Sciatic nerve (tissue), 2 donors: ENCODE measurements at regions of chr16 and their contacts with region 1.

Region 1: DNA sequence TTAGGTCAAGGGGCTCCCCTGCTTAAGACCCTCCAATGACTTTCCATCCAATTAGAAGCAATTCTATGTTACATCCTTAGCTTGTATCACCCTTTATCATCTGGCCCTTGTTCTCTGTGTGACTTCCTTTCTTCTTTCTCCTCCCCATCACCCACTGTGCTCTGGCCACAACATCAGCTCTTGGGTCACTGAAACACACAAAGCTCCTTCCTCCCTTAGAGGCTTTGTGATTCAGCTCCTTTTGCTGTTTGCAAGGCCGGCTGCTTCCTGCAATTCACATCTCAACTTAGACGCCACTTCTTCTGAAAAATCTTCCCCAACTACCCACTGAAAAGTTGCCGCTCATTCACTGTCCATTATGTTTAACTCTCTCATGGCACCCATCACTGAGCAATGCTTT is 130.9 kb upstream of the CACNG3 start:
- DNase-seq: no peak
- ATAC-seq: no peak

Region 2: DNA sequence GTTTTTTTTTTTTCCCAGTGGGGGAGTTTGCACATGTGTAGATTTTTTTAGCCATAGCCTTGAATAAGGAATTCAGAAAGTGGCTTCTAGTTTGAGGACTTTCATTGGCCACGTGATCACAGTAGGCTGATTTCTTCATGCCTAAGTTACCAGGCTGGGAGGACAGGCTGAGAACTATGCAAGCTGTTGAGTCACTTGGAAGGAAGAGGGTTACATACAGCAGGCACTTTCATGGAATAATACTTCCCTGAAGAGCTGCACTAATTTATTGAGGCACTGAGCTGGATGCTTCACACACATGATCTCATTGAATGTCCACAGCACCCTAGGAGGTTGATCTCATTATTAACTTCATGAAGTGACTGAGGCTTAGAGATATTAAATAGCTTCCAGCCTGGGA is 266.7 kb before region 1 on chr16:
- intact Hi-C with region 1: loop called (anchors 10 kb)
- DNase-seq: no peak
- ATAC-seq: no peak

Region 3: DNA sequence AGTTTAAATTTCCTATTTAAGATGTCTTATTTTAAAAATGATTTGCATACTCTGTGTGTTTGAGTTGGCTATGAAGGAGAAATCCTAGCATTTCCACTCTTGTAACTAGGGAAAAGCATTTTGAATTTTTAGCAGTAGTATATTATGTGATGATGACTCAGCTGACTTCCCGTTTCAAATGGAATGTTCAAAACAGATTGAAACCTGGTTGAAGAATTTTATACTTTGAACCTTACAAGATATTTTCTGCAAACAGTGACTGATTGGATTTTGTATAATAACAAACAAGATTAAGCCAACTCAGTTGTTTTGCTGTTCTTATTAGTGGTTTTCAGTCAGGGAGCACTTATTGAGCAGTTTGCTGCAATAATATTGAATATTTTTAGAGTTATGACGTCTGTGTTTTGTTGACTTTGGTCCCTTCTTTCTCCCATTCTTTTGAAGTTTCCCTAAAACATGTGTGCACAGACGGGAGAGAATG is 612.2 kb after region 1 on chr16:
- intact Hi-C with region 1: no loop called
- DNase-seq: no peak
- ATAC-seq: peak; percentile 57